ENCODE measurements at regions of chr11 and their contacts with region 1.

Region 1: GRCh38 chr11:128157423-128158298 is 429.7 kb downstream of the ETS1 start:
- DNase-seq: peak; percentile 67
- ATAC-seq: peak; percentile 91
- H3K4me3 Mint-ChIP-seq: peak overlapping the region; percentile 47
- H3K27ac Mint-ChIP-seq: peak overlapping the region; percentile 77
- H3K4me1 Mint-ChIP-seq: peaks cover 4% of the 10 kb centered on the region
- H3K27me3 Mint-ChIP-seq: peaks cover 9% of the 10 kb centered on the region

Region 2: DNA sequence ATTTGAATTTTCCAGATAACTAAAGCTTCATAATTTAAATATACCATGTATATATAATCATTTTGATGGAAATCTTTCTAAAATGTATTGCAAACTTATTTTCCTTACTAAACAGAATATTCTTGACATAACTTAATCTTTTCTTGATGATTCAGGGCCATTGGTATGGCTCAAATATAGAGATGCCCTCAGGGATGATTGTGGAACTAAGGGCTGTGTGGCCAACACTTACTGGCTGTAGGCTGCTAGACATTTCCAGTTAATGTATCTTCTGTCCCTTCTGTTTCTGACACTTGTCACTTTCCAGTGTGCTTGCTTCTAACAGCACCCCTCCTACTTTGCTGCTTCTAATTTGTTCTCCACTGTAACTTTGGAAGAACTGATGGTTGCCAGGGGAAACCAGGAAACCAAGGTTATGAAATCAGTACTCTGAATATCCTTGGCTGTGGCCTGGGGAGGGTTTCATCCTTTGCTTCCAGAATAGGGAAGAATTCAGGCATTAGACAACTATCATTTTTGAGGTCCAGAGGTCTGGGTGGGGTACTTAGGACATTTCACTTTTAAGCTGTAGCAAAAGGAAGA is 267.5 kb before region 1 on chr11:
- CTCF ChIA-PET with region 1: no interaction called
- DNase-seq: no peak
- ATAC-seq: no peak
- H3K4me3 Mint-ChIP-seq: no peak overlapping the region
- H3K27ac Mint-ChIP-seq: no peak overlapping the region
- H3K4me1 Mint-ChIP-seq: no peaks in the 10 kb centered on the region
- H3K27me3 Mint-ChIP-seq: peaks cover 3% of the 10 kb centered on the region

Region 3: DNA sequence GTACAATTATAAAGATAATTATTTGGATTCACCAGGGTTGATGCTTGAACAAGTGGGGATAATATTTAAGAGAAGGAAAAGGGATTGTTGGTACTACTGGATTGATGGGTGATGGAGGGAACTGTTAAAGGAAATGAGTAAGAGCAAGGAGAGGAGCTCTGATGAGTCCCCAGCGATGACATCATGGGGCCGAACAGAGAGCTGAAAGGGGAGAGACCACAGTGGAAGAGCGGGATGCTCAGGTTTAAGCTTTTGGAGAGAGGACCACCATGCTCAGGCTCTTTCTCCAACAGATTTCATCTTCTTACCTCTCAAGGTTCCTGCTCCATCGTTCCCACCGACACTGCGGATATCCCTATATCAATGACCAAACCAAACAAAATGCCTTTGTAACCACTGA is 139.0 kb before region 1 on chr11:
- CTCF ChIA-PET with region 1: interaction called, 10 read pairs
- DNase-seq: no peak
- ATAC-seq: no peak
- H3K4me3 Mint-ChIP-seq: no peak overlapping the region
- H3K27ac Mint-ChIP-seq: no peak overlapping the region
- H3K4me1 Mint-ChIP-seq: peaks cover 15% of the 10 kb centered on the region
- H3K27me3 Mint-ChIP-seq: peaks cover 20% of the 10 kb centered on the region

Region 4: GRCh38 chr11:128047026-128047425 is 110.6 kb before region 1 on chr11:
- CTCF ChIA-PET with region 1: interaction called, 51 read pairs
- DNase-seq: no peak
- ATAC-seq: no peak
- H3K4me3 Mint-ChIP-seq: no peak overlapping the region
- H3K27ac Mint-ChIP-seq: no peak overlapping the region
- H3K4me1 Mint-ChIP-seq: peaks cover 40% of the 10 kb centered on the region
- H3K27me3 Mint-ChIP-seq: no peaks in the 10 kb centered on the region

Region 5: DNA sequence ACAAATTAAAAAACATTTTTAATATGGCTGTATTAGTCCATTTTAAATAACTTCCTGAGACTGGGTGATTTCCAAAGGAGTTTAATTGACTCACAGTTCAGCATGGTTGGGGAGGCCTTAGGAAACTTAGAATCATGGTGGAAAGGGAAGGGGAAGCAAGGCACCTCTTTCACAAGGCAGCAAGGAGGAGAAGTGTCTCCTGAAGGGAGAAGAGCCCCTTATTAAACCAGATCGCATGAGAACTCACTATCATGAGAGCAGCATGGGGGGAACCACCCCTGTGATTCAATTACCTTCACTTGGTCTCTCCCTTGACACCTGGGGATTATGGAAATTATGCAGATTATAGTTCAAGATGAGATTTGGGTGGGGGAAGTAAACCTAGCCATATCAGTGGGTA is 58.9 kb before region 1 on chr11:
- CTCF ChIA-PET with region 1: no interaction called
- DNase-seq: no peak
- ATAC-seq: no peak
- H3K4me3 Mint-ChIP-seq: no peak overlapping the region
- H3K27ac Mint-ChIP-seq: no peak overlapping the region
- H3K4me1 Mint-ChIP-seq: peaks cover 5% of the 10 kb centered on the region
- H3K27me3 Mint-ChIP-seq: peaks cover 12% of the 10 kb centered on the region

Region 6: DNA sequence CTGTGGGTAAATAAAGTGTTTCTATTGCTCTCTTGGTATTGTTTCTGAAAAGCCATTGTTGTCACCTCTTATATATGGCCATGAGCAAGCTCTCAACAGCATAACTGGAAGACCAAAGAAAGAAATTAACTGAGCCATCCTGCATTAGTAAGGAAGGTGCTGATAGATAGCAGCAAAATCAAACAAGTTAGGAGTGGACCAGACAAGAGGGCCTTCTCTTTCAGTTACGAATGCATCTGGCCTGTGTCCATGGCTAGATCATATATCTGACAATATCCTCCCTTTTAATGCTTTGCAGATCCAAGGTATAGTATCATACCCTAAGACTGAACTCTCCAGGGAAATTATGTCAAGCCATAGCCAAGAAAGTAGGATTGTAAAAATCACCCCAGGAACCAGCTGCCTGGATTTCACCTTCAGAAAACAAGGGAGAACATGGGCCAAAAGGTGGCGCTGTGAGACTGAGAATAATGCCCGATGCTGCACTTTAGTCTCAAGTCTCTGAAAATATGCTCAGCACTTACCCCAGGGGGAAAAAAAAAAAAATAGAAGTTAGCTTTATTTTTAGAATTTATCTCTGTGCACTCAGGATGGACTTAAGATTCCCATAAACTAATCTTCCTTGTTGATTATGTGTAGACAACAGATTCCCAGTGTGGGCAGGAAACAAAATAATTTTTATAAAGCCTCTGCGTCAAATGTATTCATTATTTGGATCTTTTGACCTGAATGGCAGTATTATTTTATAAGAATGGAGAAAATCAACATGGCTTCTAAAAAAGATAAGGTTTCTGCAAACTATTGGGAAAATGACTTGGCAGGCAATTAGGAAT is 14.6 kb after region 1 on chr11:
- CTCF ChIA-PET with region 1: interaction called, 74 read pairs
- DNase-seq: peak; percentile 91
- ATAC-seq: peak; percentile 93
- H3K4me3 Mint-ChIP-seq: no peak overlapping the region
- H3K27ac Mint-ChIP-seq: no peak overlapping the region
- H3K4me1 Mint-ChIP-seq: peaks cover 9% of the 10 kb centered on the region
- H3K27me3 Mint-ChIP-seq: no peaks in the 10 kb centered on the region

Region 7: DNA sequence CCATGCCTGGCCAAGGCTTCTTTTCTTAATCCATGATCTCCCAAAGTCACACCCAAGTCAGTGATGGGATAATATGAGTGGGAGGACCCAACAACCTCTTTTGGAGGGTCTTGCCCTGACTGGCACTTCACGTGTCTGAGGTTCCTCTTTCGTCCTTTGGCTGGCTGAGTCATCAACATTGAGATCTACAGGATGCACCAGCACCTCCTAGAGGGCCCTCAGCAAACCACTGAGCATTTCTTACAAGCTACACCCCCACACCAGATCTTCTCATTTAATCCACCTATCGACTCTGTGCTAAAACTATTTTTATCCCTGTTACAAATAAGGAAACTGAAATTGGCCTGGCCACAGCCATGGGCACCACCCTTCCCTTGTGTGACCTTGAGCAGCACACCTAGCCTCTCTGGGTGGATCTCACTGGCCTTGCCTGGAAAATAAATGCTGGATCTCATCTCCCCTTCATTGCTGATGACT is 599.6 kb after region 1 on chr11:
- CTCF ChIA-PET with region 1: interaction called, 10 read pairs
- DNase-seq: peak; percentile 87
- ATAC-seq: peak; percentile 90
- H3K4me3 Mint-ChIP-seq: peak overlapping the region; percentile 27
- H3K27ac Mint-ChIP-seq: peak overlapping the region; percentile 92
- H3K4me1 Mint-ChIP-seq: peaks cover 63% of the 10 kb centered on the region
- H3K27me3 Mint-ChIP-seq: no peaks in the 10 kb centered on the region

Region 8: DNA sequence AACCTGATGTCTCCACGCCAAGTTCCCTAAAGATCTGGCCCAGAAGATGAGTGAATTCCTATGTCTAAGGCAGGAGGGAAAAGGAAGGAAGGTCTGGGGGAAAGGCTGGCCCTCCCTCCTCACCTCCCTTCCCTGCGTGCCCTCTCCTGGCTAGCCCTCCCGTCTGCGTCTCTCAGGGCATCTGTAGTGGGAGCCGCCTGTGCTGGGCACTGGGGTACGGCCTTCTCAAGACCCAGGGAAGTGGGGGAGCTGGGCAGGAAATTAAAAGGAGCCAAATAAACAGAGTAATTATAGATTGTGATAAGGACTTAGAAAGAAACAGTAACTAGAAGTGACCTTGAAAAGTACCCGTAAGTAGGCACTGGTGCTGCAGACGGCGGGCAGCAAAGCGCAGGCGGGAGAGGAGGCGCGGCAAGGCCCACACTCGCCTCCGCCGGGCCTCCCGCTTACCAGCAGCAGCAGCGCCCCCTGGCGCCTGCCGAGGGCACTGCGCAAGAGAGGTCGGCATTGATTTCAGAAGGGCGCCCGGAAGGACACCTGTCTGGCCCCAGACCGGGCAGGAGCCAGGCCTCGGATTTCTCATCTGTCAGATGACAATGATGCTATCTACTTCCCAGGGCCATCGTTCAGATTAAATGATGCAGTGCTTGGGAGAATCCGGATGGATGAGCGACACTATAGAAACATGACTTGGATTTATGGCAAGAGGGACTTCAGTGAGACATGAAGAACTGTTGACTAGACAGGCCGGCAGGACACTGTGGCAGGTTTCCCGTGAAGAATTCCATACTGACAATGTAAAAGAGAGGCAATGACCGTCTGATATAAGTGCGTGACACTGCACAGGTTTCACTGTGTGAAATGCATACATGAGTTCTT is 702.1 kb after region 1 on chr11:
- CTCF ChIA-PET with region 1: interaction called, 16 read pairs
- DNase-seq: peak; percentile 84
- ATAC-seq: peak; percentile 90
- H3K4me3 Mint-ChIP-seq: no peak overlapping the region
- H3K27ac Mint-ChIP-seq: no peak overlapping the region
- H3K4me1 Mint-ChIP-seq: peaks cover 6% of the 10 kb centered on the region
- H3K27me3 Mint-ChIP-seq: peaks cover 11% of the 10 kb centered on the region

Measured in activated CD8-positive, alpha-beta memory T cell treated with anti-CD3 and anti-CD28 coated beads, Interleukin-2, amount 10 ng/mL, durations not matched to agents 7 days and 5 days (primary cell).